ENCODE measurements at regions of chr7 and their contacts with region 1.

Region 1: GRCh38 chr7:39623018-39623731 is at the start of gene RALA:
- DNase-seq: peak; percentile 99
- H3K4me3 ChIP-seq: peak within 1 kb of the TSS; percentile 93 to 98
- H3K27ac ChIP-seq: peak within 1 kb of the TSS; percentile 93 to 98
- H3K4me1 ChIP-seq: peaks cover 29 to 38% of the 10 kb centered on the region in 2 experiments; a peak in 3 of 4 replicates
- H3K27me3 ChIP-seq: no peaks in the 10 kb centered on the region
- CTCF ChIP-seq: no peak
- EP300 ChIP-seq: peak in 1 of 2 experiments; percentile 27; a peak in 1 of 4 replicates
- RAD21 ChIP-seq: no peak
- polyA plus RNA-seq, gene RALA: 29.0 and 37.4 TPM in 2 replicates

Region 2: DNA sequence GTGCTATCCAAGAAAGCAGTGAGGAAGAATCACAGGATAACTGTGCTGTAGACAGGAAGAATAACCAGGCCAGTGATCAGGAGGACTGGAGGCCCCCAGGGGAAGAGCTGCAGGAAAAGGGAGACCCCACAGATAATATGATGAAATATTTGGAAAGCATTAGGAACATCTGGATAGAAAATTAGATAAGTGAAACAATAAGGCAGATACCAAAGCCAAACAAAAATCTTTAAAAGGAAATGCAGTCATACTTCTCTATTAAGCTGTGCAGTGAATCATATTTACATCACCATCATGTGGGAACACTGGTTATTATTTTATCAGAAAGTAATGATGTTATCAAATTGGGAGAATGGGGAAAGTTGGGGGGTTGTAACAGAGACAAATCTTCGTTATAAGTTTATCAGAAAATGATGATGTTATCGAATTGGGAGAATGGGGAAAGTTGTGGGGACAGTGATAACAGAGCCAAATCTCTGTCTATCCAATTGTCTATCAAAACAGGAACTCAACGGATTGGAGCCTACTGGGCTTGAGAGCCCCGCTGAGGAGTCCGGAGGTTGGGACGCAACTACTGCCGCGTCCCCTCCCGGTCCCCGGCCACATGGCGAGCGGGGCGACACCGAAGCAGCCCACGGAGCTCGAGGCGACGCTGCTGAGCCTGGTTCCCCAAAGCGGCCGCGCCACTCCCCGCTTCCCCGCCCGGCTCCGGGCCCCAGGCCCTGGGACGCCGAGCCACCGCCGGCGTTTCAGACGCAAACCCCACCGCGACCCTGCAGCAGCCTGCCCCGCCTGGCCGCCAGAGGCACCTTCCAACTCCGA is 13.9 kb before region 1 on chr7:
- CTCF ChIA-PET with region 1: interaction called, 10 read pairs
- POLR2A ChIA-PET with region 1: interaction called, 15 read pairs
- DNase-seq: peak; percentile 85
- H3K4me3 ChIP-seq: peak overlapping the region; percentile 20 to 34; a peak in 2 of 4 replicates
- H3K27ac ChIP-seq: peak overlapping the region; percentile 62 to 91
- H3K4me1 ChIP-seq: peaks cover 20 to 31% of the 10 kb centered on the region in 2 experiments; a peak in 3 of 4 replicates
- H3K27me3 ChIP-seq: no peaks in the 10 kb centered on the region
- CTCF ChIP-seq: peak; percentile 25
- EP300 ChIP-seq: peak; percentile 72 to 92
- RAD21 ChIP-seq: no peak

Region 3: DNA sequence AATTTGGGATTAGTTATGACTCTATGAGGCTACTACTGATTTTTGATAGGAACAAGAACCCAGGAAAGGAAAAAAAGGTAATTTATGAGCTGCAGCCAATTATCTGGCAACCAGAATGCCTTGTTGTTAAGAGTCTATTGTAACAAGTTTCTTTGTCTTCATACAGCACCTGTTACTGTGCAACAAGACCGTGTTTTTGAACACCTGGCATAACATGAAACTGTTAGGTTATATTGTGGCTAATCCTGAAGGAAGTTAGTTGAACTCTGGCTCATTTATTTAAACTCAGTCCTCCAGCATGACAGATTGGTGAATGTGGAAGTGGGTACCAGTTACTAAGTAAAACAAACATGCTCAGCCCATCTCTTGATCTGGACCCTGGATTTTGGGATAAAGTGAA is 33.2 kb after region 1 on chr7:
- CTCF ChIA-PET with region 1: no interaction called
- POLR2A ChIA-PET with region 1: no interaction called
- DNase-seq: no peak
- H3K4me3 ChIP-seq: no peak overlapping the region
- H3K27ac ChIP-seq: no peak overlapping the region
- H3K4me1 ChIP-seq: peaks cover 0 to 5% of the 10 kb centered on the region in 2 experiments; a peak in 1 of 4 replicates
- H3K27me3 ChIP-seq: no peaks in the 10 kb centered on the region
- CTCF ChIP-seq: no peak
- EP300 ChIP-seq: no peak
- RAD21 ChIP-seq: no peak

Region 4: DNA sequence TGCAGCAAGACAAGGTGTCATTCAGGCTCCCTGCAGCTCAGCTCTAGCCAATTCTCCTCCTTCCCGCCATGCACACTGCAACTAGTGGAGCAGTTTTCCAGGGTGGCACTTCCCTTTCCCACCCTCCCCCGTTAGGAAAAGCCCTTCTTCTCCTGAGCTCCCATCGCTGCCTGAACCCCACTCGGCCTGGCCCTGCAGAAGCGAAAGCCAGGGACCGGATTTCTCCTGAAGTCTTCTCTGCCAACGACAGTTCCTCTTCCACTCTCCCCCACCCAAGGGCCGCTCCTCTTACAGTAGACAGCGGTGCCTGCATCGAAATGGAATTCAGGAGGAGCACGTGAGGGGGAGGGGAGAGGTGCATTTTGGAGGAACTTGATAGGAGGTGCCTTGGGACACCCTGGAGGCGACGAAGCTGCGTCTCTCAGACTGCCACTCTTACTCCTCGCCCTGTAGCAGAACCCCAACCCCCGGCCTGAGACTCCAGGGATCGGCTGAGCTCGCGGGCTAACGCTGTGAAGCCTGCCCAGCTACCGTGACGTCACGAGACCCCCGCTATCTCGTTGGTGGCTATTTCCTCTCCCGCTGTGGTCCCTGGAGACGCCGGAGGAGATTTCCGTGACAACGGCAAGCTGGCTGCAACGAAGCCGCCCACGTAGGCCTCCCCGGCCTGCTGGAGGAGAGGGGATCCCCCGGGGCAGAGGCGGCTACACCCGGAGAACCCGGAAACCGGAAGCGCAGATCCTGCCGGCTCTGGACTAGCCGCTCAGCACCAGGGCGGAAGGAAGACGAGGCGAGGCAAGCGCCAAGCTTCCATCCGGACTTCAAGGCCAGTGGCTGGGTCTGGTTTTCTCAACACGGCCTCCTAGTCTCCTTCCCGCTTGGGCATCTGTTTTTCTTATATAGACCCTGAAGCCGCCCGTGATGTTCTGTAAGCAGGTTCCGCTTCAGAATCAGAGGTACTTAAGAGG is 109.9 kb after region 1 on chr7:
- CTCF ChIA-PET with region 1: interaction called, 5 read pairs
- POLR2A ChIA-PET with region 1: interaction called, 28 read pairs
- DNase-seq: peak; percentile 95
- H3K4me3 ChIP-seq: peak overlapping the region; percentile 62 to 70
- H3K27ac ChIP-seq: peak overlapping the region; percentile 91 to 98
- H3K4me1 ChIP-seq: peaks cover 11 to 20% of the 10 kb centered on the region in 2 experiments; a peak in 3 of 4 replicates
- H3K27me3 ChIP-seq: no peaks in the 10 kb centered on the region
- CTCF ChIP-seq: no peak
- EP300 ChIP-seq: no peak; a peak in 1 of 4 replicates
- RAD21 ChIP-seq: no peak

Region 5: DNA sequence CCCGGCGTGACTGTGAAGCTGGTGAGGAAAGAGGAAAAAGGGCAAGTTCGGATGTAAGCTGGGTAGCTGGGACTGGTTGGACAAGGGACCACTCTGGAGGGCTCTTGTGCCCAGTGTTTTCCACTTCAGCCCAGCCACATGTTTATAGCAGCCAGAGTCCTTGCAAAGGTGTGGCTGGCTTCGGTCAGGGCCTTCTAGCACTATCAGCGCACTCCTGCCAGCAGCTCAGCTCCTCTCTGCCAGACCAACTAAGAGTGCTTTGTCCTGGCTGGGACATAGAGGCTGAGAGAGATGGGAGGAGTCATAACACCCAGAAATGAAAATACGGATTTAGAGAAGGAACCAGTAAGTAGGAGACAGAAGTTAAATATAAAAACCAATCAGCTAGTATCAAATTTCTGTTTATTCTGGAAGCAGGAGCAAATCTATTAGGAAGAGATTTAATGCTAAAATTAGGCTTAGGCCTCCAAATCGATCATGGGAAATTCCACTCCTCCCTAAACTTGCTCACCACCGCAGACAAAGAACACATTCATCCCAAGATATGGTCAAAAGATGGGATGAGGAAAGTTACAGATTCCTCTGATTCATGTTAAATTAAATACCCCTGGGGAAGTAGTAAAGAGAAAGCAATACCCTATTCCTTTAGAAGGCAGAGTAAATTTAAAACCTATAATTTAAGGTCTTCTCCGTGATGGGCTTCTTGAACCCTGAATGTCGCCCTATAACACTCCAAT is 135.2 kb after region 1 on chr7:
- CTCF ChIA-PET with region 1: no interaction called
- POLR2A ChIA-PET with region 1: no interaction called
- DNase-seq: no peak
- H3K4me3 ChIP-seq: no peak overlapping the region
- H3K27ac ChIP-seq: no peak overlapping the region
- H3K4me1 ChIP-seq: peaks cover 5 to 13% of the 10 kb centered on the region in 2 experiments; a peak in 1 of 4 replicates
- H3K27me3 ChIP-seq: no peaks in the 10 kb centered on the region
- CTCF ChIP-seq: no peak
- EP300 ChIP-seq: no peak
- RAD21 ChIP-seq: no peak

Region 6: GRCh38 chr7:40324889-40325288 is 701.7 kb after region 1 on chr7:
- CTCF ChIA-PET with region 1: no interaction called
- POLR2A ChIA-PET with region 1: no interaction called
- DNase-seq: no peak
- H3K4me3 ChIP-seq: no peak overlapping the region
- H3K27ac ChIP-seq: peak overlapping the region; percentile 64 to 91
- H3K4me1 ChIP-seq: peaks cover 2% of the 10 kb centered on the region in 2 experiments; a peak in 3 of 4 replicates
- H3K27me3 ChIP-seq: no peaks in the 10 kb centered on the region
- CTCF ChIP-seq: no peak
- EP300 ChIP-seq: peak; percentile 44 to 45; a peak in 2 of 4 replicates
- RAD21 ChIP-seq: no peak